ENCODE measurements at regions of chr9 and their contacts with region 1.

Region 1: DNA sequence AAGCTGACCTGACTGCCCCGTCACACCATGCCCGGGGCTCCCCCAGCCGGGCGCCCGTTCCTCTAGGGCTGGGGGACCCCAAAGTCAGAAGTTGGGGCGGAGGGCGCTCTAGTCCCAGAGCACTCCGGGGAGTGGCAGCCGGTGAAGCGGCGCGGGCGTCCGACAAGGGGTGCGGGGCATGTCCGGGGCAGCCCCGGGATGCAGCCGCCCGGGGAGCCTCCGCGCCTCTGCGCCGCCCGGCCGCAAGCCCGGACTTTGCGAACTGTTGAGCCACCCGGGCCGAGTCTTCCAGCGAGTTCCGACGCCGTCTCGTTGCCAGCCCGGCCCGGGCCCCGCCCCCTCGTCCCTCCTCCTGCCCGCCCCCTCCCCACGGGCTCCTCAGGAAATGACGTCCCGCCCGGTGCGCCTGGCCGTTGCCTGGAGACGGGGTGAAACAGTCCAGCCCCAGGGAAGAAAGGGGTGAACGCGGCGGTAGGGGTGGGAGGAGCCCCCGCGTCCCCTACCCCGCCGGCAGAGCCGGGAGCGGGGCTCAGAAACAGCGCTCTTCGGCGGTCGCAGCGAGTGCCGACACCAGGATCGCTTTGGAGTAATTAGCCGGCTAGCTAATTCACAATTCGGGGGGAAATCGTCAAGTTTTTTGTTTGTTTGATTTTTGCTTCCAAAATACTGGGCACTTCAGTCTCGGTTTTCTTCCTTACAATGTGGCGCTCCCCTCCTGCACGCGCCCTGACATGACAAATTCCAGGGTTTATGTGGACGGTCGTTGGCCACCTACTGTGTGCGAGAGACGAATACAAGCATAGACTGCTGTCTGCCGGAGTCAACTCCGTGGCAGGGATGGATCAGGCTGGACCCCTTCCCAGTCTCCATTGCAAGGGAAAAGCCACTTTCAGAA is at the start of gene WHRN:
- DNase-seq: peak; percentile 77
- ATAC-seq: peak; percentile 80
- H3K4me3 ChIP-seq: peak within 1 kb of the TSS; percentile 76 to 80 (median 77)
- H3K27ac ChIP-seq: peak within 1 kb of the TSS; percentile 17
- H3K4me1 ChIP-seq: peaks cover 38% of the 10 kb centered on the region
- H3K27me3 ChIP-seq: peaks cover 0 to 23% of the 10 kb centered on the region in 2 experiments; a peak in 3 of 5 replicates
- CTCF ChIP-seq: 0 out of 2 replicates have a peak, but pooled peaks have one; percentile 6
- EP300 ChIP-seq: no peak
- POLR2A ChIP-seq: peak; percentile 77 to 81
- RAD21 ChIP-seq: no peak
- total RNA-seq, gene WHRN: 1.8 and 2.3 TPM in 2 replicates

Region 2: GRCh38 chr9:114405294-114406034 is 100.0 kb before region 1 on chr9:
- CTCF ChIA-PET with region 1: no interaction called
- POLR2A ChIA-PET with region 1: interaction called, 5 read pairs
- in situ Hi-C with region 1: loop called (anchors 10 kb)
- intact Hi-C with region 1: loop called (anchors 1 kb)
- DNase-seq: peak; percentile 72
- ATAC-seq: peak; percentile 88
- H3K4me3 ChIP-seq: no peak overlapping the region
- H3K27ac ChIP-seq: no peak overlapping the region
- H3K4me1 ChIP-seq: peaks cover 29% of the 10 kb centered on the region
- H3K27me3 ChIP-seq: no peaks in the 10 kb centered on the region
- CTCF ChIP-seq: peak; percentile 95
- EP300 ChIP-seq: no peak
- POLR2A ChIP-seq: no peak
- RAD21 ChIP-seq: peak; percentile 94

Region 3: DNA sequence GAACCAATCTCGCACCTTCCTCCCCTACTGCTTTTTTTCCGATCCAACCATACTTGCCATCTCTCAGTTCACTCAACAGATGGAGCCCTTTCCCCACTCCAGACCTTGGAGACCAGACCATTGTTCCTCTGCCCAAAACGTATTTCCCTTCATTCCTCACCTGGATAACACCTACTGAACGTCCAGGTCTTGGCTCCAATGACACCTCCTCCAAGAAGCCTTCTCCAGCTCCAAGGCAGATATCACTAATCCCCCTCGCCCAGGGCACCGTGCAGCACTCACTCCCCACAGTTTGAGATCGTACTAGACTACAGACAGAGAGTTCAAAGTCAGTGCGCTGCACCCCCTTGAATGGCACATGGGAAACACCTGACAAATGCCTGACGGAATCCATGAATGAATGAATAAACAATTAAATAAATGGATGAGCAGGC is 70.5 kb before region 1 on chr9:
- CTCF ChIA-PET with region 1: no interaction called
- POLR2A ChIA-PET with region 1: no interaction called
- in situ Hi-C with region 1: no loop called
- intact Hi-C with region 1: loop called (anchors 1 kb)
- DNase-seq: peak; percentile 33
- ATAC-seq: peak; percentile 87
- H3K4me3 ChIP-seq: no peak overlapping the region
- H3K27ac ChIP-seq: no peak overlapping the region
- H3K4me1 ChIP-seq: peaks cover 29% of the 10 kb centered on the region
- H3K27me3 ChIP-seq: no peaks in the 10 kb centered on the region
- CTCF ChIP-seq: peak; percentile 89
- EP300 ChIP-seq: no peak
- POLR2A ChIP-seq: no peak
- RAD21 ChIP-seq: peak; percentile 75

Region 4: DNA sequence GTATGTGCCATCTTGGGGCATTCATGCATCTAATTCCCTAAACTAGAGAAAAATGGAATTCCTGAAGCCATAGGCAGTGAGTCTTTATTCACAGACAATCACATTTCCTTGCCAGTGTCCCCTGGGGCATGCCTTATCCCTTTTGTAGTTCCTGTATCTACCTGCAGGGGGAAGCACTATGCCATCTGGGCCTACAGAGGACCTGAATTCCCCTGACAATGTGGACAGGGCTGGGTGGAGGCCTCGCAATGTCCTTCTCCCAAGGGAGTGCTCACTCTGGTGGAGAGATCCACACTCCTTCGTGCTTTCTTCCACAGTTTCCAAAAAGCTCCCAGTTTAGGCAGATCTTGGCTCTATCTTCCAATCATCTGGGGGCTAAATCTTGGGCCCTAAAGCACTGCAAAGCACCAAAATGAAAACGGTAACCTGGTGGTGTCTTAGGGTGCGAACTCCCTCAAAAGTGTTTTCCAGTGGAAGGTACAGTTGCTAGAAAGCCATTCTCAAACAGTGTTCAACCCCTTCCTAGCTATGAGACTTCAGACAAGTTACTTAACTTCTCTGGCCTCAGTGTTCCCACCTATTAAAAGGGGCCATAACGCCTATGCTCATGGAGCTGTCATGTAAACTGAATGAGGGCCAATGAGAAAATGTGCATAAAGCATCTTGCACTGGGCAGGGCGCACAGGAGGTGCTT is 17.7 kb before region 1 on chr9:
- CTCF ChIA-PET with region 1: interaction called, 5 read pairs
- POLR2A ChIA-PET with region 1: interaction called, 4 read pairs
- in situ Hi-C with region 1: no loop called
- intact Hi-C with region 1: loop called (anchors 2 kb)
- DNase-seq: peak; percentile 71
- ATAC-seq: peak; percentile 99
- H3K4me3 ChIP-seq: no peak overlapping the region
- H3K27ac ChIP-seq: no peak overlapping the region
- H3K4me1 ChIP-seq: no peaks in the 10 kb centered on the region
- H3K27me3 ChIP-seq: no peaks in the 10 kb centered on the region
- CTCF ChIP-seq: peak; percentile 94
- EP300 ChIP-seq: no peak
- POLR2A ChIP-seq: no peak
- RAD21 ChIP-seq: peak; percentile 80

Measured in HepG2 (cell line).